ENCODE measurements at regions of chr14 and their contacts with region 1.

Region 1: GRCh38 chr14:49867831-49868723 is 15.5 kb upstream of the NEMF start:
- DNase-seq: peak; percentile 98
- ATAC-seq: peak; percentile 87
- H3K4me3 ChIP-seq: peak overlapping the region; percentile 47 to 72 (median 62)
- H3K4me3 Mint-ChIP-seq: peak overlapping the region; percentile 91
- H3K27ac ChIP-seq: peak overlapping the region; percentile 89 to 96
- H3K27ac Mint-ChIP-seq: peak overlapping the region; percentile 99
- H3K4me1 ChIP-seq: peaks cover 60 to 66% of the 10 kb centered on the region in 2 donors
- H3K4me1 Mint-ChIP-seq: peaks cover 39% of the 10 kb centered on the region
- H3K27me3 ChIP-seq: no peaks in the 10 kb centered on the region
- H3K27me3 Mint-ChIP-seq: no peaks in the 10 kb centered on the region
- CTCF ChIP-seq: no peak

Region 2: GRCh38 chr14:49828640-49829039 is 39.4 kb before region 1 on chr14:
- CTCF ChIA-PET with region 1: no interaction called
- POLR2A ChIA-PET with region 1: no interaction called
- intact Hi-C with region 1: no loop called
- DNase-seq: no peak
- ATAC-seq: no peak
- H3K4me3 ChIP-seq: no peak overlapping the region
- H3K4me3 Mint-ChIP-seq: no peak overlapping the region
- H3K27ac ChIP-seq: no peak overlapping the region
- H3K27ac Mint-ChIP-seq: no peak overlapping the region
- H3K4me1 ChIP-seq: no peaks in the 10 kb centered on the region
- H3K4me1 Mint-ChIP-seq: peaks cover 3% of the 10 kb centered on the region
- H3K27me3 ChIP-seq: no peaks in the 10 kb centered on the region
- H3K27me3 Mint-ChIP-seq: no peaks in the 10 kb centered on the region
- CTCF ChIP-seq: no peak

Region 3: GRCh38 chr14:49852301-49853157 is 15.5 kb before region 1 on chr14 and contains the start of gene NEMF:
- CTCF ChIA-PET with region 1: interaction called, 106 read pairs
- POLR2A ChIA-PET with region 1: interaction called, 31 read pairs
- intact Hi-C with region 1: no loop called
- DNase-seq: peak; percentile 94
- ATAC-seq: peak; percentile 84
- H3K4me3 ChIP-seq: peak within 1 kb of the TSS; percentile 78 to 99 (median 99)
- H3K4me3 Mint-ChIP-seq: peak within 1 kb of the TSS; percentile 98
- H3K27ac ChIP-seq: peak within 1 kb of the TSS; percentile 72 to 88
- H3K27ac Mint-ChIP-seq: peak within 1 kb of the TSS; percentile 98
- H3K4me1 ChIP-seq: peaks cover 20 to 31% of the 10 kb centered on the region in 2 donors
- H3K4me1 Mint-ChIP-seq: peaks cover 44% of the 10 kb centered on the region
- H3K27me3 ChIP-seq: no peaks in the 10 kb centered on the region
- H3K27me3 Mint-ChIP-seq: no peaks in the 10 kb centered on the region
- CTCF ChIP-seq: peak; percentile 86
- total RNA-seq, gene NEMF: 127 and 146 TPM in 2 replicates

Region 4: GRCh38 chr14:49892636-49893308 is 24.7 kb after region 1 on chr14 and contains the start of gene ARF6:
- CTCF ChIA-PET with region 1: interaction called, 48 read pairs
- POLR2A ChIA-PET with region 1: interaction called, 45 read pairs
- intact Hi-C with region 1: loop called (anchors 1 kb)
- DNase-seq: peak; percentile 98
- ATAC-seq: peak; percentile 87
- H3K4me3 ChIP-seq: peak within 1 kb of the TSS; percentile 74 to 96 (median 89)
- H3K4me3 Mint-ChIP-seq: peak within 1 kb of the TSS; percentile 97
- H3K27ac ChIP-seq: peak within 1 kb of the TSS; percentile 98 to 99
- H3K27ac Mint-ChIP-seq: peak within 1 kb of the TSS; percentile 98
- H3K4me1 ChIP-seq: peaks cover 28 to 35% of the 10 kb centered on the region in 2 donors
- H3K4me1 Mint-ChIP-seq: peaks cover 42% of the 10 kb centered on the region
- H3K27me3 ChIP-seq: no peaks in the 10 kb centered on the region
- H3K27me3 Mint-ChIP-seq: no peaks in the 10 kb centered on the region
- CTCF ChIP-seq: no peak
- total RNA-seq, gene ARF6: 132 and 135 TPM in 2 replicates

Region 5: GRCh38 chr14:50003213-50004031 is 135.3 kb after region 1 on chr14:
- CTCF ChIA-PET with region 1: interaction called, 114 read pairs
- POLR2A ChIA-PET with region 1: interaction called, 29 read pairs
- intact Hi-C with region 1: loop called (anchors 1 kb)
- DNase-seq: peak; percentile 91
- ATAC-seq: peak; percentile 62
- H3K4me3 ChIP-seq: peak overlapping the region; percentile 21 to 69 (median 59)
- H3K4me3 Mint-ChIP-seq: peak overlapping the region; percentile 91
- H3K27ac ChIP-seq: peak overlapping the region; percentile 98 to 99
- H3K27ac Mint-ChIP-seq: peak overlapping the region; percentile 96
- H3K4me1 ChIP-seq: peaks cover 70 to 75% of the 10 kb centered on the region in 2 donors
- H3K4me1 Mint-ChIP-seq: peaks cover 79% of the 10 kb centered on the region
- H3K27me3 ChIP-seq: no peaks in the 10 kb centered on the region
- H3K27me3 Mint-ChIP-seq: no peaks in the 10 kb centered on the region
- CTCF ChIP-seq: peak; percentile 44

Region 6: GRCh38 chr14:50085570-50086320 is 217.7 kb after region 1 on chr14:
- CTCF ChIA-PET with region 1: interaction called, 70 read pairs
- POLR2A ChIA-PET with region 1: interaction called, 14 read pairs
- intact Hi-C with region 1: loop called (anchors 2 kb)
- DNase-seq: peak; percentile 91
- ATAC-seq: peak; percentile 75
- H3K4me3 ChIP-seq: peak overlapping the region in 3 of 5 experiments; percentile 18 to 48 (median 24)
- H3K4me3 Mint-ChIP-seq: peak overlapping the region; percentile 82
- H3K27ac ChIP-seq: peak overlapping the region; percentile 95 to 100
- H3K27ac Mint-ChIP-seq: peak overlapping the region; percentile 96
- H3K4me1 ChIP-seq: peaks cover 85 to 91% of the 10 kb centered on the region in 2 donors
- H3K4me1 Mint-ChIP-seq: peaks cover 87% of the 10 kb centered on the region
- H3K27me3 ChIP-seq: no peaks in the 10 kb centered on the region
- H3K27me3 Mint-ChIP-seq: no peaks in the 10 kb centered on the region
- CTCF ChIP-seq: no peak

Region 7: GRCh38 chr14:50116181-50116956 is 248.3 kb after region 1 on chr14 and contains the start of gene VCPKMT:
- CTCF ChIA-PET with region 1: interaction called, 52 read pairs
- POLR2A ChIA-PET with region 1: interaction called, 7 read pairs
- intact Hi-C with region 1: no loop called
- DNase-seq: peak; percentile 97
- ATAC-seq: peak; percentile 97
- H3K4me3 ChIP-seq: peak within 1 kb of the TSS; percentile 69 to 92 (median 87)
- H3K4me3 Mint-ChIP-seq: peak within 1 kb of the TSS; percentile 98
- H3K27ac ChIP-seq: peak within 1 kb of the TSS; percentile 92 to 99
- H3K27ac Mint-ChIP-seq: peak within 1 kb of the TSS; percentile 98
- H3K4me1 ChIP-seq: peaks cover 44 to 45% of the 10 kb centered on the region in 2 donors
- H3K4me1 Mint-ChIP-seq: peaks cover 45% of the 10 kb centered on the region
- H3K27me3 ChIP-seq: no peaks in the 10 kb centered on the region
- H3K27me3 Mint-ChIP-seq: no peaks in the 10 kb centered on the region
- CTCF ChIP-seq: no peak
- total RNA-seq, gene VCPKMT: 22.8 and 27.1 TPM in 2 replicates

Measured in B cell (primary cell).